T-cell (primary cell): ENCODE measurements at regions of chr4 and their contacts with region 1.

Region 1: GRCh38 chr4:6873792-6874461 is 35.7 kb upstream of the TBC1D14 start:
- DNase-seq: peak; percentile 55 to 86 (median 75)
- ATAC-seq: peak; percentile 79 to 94 (median 88)
- H3K4me3 ChIP-seq: no peak overlapping the region
- H3K4me3 Mint-ChIP-seq: no peak overlapping the region
- H3K27ac ChIP-seq: no peak overlapping the region
- H3K27ac Mint-ChIP-seq: peak overlapping the region in 1 of 2 donors; percentile 34
- H3K4me1 ChIP-seq: peaks cover 0 to 3% of the 10 kb centered on the region in 2 experiments
- H3K4me1 Mint-ChIP-seq: peaks cover 5 to 7% (median 5%) of the 10 kb centered on the region in 3 donors
- H3K27me3 ChIP-seq: no peaks in the 10 kb centered on the region
- H3K27me3 Mint-ChIP-seq: no peaks in the 10 kb centered on the region

Region 2: GRCh38 chr4:6625262-6625661 is 248.7 kb before region 1 on chr4:
- CTCF ChIA-PET with region 1: no interaction called
- POLR2A ChIA-PET with region 1: interaction called in 1 of 2 experiments, 15 read pairs
- DNase-seq: no peak
- ATAC-seq: no peak
- H3K4me3 ChIP-seq: no peak overlapping the region
- H3K4me3 Mint-ChIP-seq: no peak overlapping the region
- H3K27ac ChIP-seq: no peak overlapping the region
- H3K27ac Mint-ChIP-seq: no peak overlapping the region
- H3K4me1 ChIP-seq: no peaks in the 10 kb centered on the region
- H3K4me1 Mint-ChIP-seq: no peaks in the 10 kb centered on the region
- H3K27me3 ChIP-seq: no peaks in the 10 kb centered on the region
- H3K27me3 Mint-ChIP-seq: no peaks in the 10 kb centered on the region

Region 3: GRCh38 chr4:6716018-6716911 is 157.7 kb before region 1 on chr4 and contains the start of gene BLOC1S4:
- CTCF ChIA-PET with region 1: interaction called, 64 to 77 read pairs
- POLR2A ChIA-PET with region 1: interaction called, 4 to 9 read pairs
- DNase-seq: peak; percentile 78 to 99 (median 87)
- ATAC-seq: peak; percentile 85 to 90 (median 86)
- H3K4me3 ChIP-seq: peak within 1 kb of the TSS; percentile 87 to 90
- H3K4me3 Mint-ChIP-seq: peak within 1 kb of the TSS; percentile 90 to 96 (median 91)
- H3K27ac ChIP-seq: peak within 1 kb of the TSS; percentile 82
- H3K27ac Mint-ChIP-seq: peak within 1 kb of the TSS; percentile 87 to 95
- H3K4me1 ChIP-seq: peaks cover 15 to 27% of the 10 kb centered on the region in 2 experiments
- H3K4me1 Mint-ChIP-seq: peaks cover 34 to 42% (median 42%) of the 10 kb centered on the region in 3 donors
- H3K27me3 ChIP-seq: no peaks in the 10 kb centered on the region
- H3K27me3 Mint-ChIP-seq: no peaks in the 10 kb centered on the region
- total RNA-seq, gene BLOC1S4: 20.7 to 41.9 (median 36.6) TPM

Region 4: GRCh38 chr4:6859543-6859942 is 14.4 kb before region 1 on chr4:
- CTCF ChIA-PET with region 1: interaction called in 1 of 2 experiments, 12 read pairs
- POLR2A ChIA-PET with region 1: no interaction called
- DNase-seq: no peak
- ATAC-seq: no peak
- H3K4me3 ChIP-seq: no peak overlapping the region
- H3K4me3 Mint-ChIP-seq: no peak overlapping the region
- H3K27ac ChIP-seq: no peak overlapping the region
- H3K27ac Mint-ChIP-seq: peak overlapping the region in 1 of 2 donors; percentile 48
- H3K4me1 ChIP-seq: peaks cover 0 to 3% of the 10 kb centered on the region in 2 experiments
- H3K4me1 Mint-ChIP-seq: peaks cover 9 to 21% (median 17%) of the 10 kb centered on the region in 3 donors
- H3K27me3 ChIP-seq: no peaks in the 10 kb centered on the region
- H3K27me3 Mint-ChIP-seq: no peaks in the 10 kb centered on the region

Region 5: DNA sequence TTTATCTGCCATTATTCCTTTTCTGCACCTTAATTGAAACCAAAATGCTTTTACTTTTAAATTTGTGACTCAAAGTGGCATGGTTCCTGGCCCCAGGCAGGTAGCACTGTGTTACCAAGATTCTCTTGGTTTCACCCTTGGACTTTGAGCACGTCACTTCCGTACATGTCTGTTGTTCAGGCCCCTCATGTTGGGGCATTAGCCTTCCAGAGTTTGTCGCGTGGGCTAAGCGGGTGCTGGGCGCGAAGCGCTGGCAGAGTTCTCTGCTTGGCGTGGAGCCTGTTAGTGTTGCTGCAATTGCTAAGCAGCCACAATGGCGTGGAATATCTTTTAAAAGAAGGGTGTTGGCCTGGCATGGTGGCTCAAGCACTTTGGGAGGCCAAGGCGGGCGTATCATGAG is 155.3 kb after region 1 on chr4:
- CTCF ChIA-PET with region 1: no interaction called
- POLR2A ChIA-PET with region 1: no interaction called
- DNase-seq: no peak
- ATAC-seq: no peak
- H3K4me3 ChIP-seq: no peak overlapping the region
- H3K4me3 Mint-ChIP-seq: no peak overlapping the region
- H3K27ac ChIP-seq: no peak overlapping the region
- H3K27ac Mint-ChIP-seq: no peak overlapping the region
- H3K4me1 ChIP-seq: peaks cover 0 to 3% of the 10 kb centered on the region in 2 experiments
- H3K4me1 Mint-ChIP-seq: no peaks in the 10 kb centered on the region
- H3K27me3 ChIP-seq: no peaks in the 10 kb centered on the region
- H3K27me3 Mint-ChIP-seq: no peaks in the 10 kb centered on the region